ENCODE measurements at regions of chr17 and their contacts with region 1.

Region 1: DNA sequence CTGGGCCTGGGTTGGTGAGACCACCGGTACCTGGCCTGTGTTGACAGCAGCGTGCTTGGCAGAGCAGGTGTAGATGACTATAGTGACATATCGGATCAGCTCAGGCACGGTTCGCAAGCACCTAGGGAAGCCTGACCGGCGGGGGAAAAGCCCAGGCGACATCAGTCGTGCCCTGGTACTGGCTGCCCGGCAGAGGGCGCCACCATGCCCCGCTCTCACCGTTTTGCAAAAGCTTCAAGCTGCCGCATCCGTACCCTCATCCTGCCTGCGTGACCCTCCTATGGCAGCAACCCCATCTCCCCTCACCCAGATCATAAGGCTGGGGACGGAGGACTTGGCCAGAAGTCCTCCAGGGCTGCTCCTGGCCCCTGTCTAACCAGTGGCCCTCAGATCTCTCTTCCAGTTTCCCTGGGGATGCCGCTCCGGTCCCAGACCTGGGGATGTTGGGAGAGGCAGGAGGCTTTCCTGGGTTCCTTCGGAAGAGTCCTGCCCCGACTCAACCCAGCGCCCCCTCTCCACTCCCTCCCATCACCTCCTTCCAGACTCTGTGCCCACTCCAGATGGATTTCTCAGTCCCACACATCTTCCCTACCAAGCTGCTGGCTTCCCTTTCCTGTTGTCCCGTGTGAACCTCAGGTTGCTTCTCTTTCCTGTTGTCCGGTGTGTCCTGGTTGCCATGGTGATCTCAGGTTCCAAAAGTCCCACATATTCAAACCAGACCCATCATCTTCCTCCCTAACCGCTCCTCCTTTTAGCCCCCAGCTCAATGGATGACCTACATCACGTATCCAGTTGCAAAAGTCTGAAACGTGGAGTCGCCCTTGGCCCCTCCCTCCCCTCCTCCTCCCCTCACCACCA is 13.7 kb downstream of the ALOX12B start:
- DNase-seq: peak; percentile 83
- ATAC-seq: peak; percentile 99
- H3K4me3 Mint-ChIP-seq: peak overlapping the region; percentile 78
- H3K27ac Mint-ChIP-seq: peak overlapping the region; percentile 78
- H3K4me1 Mint-ChIP-seq: peaks cover 31% of the 10 kb centered on the region
- H3K27me3 Mint-ChIP-seq: peaks cover 45% of the 10 kb centered on the region
- CTCF ChIP-seq: peak; percentile 56

Region 2: DNA sequence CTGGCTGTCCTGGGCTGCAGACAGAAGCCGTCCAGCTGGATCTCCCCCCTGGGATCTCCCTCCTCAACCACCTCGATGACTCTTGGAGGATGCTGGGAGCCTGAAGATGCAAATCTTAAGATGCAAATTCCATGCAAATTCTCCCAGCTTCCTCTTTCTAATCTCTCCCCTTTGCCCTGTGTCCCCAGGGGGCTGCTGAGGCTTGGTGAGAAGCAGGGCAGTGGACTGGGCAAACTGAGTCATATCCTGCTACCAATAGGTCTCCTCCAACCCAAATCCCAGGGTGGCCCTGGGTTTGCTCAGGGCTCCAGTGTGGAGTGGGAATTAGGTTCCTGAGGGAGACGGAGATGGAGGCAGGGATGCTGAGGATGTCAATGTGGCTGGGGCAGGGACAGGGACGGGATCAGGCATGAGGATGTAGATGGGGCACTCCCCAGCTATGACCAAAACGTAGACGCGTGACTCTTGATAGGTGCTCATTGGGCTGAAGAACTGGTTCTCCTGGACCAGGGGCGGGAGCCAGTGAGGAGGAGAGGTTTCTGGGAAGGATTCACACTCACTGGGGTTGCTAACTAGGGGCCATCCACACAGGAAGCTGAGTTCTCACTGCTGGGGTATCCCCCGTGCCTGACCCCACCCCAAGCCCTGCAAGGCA is 17.3 kb after region 1 on chr17:
- CTCF ChIA-PET with region 1: interaction called, 45 read pairs
- POLR2A ChIA-PET with region 1: interaction called, 18 read pairs
- intact Hi-C with region 1: loop called (anchors 2 kb)
- DNase-seq: peak; percentile 71
- ATAC-seq: peak; percentile 90
- H3K4me3 Mint-ChIP-seq: peak overlapping the region; percentile 80
- H3K27ac Mint-ChIP-seq: peak overlapping the region; percentile 95
- H3K4me1 Mint-ChIP-seq: peaks cover 46% of the 10 kb centered on the region
- H3K27me3 Mint-ChIP-seq: peaks cover 7% of the 10 kb centered on the region
- CTCF ChIP-seq: no peak

Region 3: GRCh38 chr17:8109661-8110464 is 36.0 kb after region 1 on chr17:
- CTCF ChIA-PET with region 1: interaction called, 112 read pairs
- POLR2A ChIA-PET with region 1: interaction called, 6 read pairs
- intact Hi-C with region 1: loop called (anchors 1 kb)
- DNase-seq: peak; percentile 79
- ATAC-seq: peak; percentile 98
- H3K4me3 Mint-ChIP-seq: peak overlapping the region; percentile 57
- H3K27ac Mint-ChIP-seq: no peak overlapping the region
- H3K4me1 Mint-ChIP-seq: peaks cover 6% of the 10 kb centered on the region
- H3K27me3 Mint-ChIP-seq: peaks cover 34% of the 10 kb centered on the region
- CTCF ChIP-seq: no peak

Region 4: DNA sequence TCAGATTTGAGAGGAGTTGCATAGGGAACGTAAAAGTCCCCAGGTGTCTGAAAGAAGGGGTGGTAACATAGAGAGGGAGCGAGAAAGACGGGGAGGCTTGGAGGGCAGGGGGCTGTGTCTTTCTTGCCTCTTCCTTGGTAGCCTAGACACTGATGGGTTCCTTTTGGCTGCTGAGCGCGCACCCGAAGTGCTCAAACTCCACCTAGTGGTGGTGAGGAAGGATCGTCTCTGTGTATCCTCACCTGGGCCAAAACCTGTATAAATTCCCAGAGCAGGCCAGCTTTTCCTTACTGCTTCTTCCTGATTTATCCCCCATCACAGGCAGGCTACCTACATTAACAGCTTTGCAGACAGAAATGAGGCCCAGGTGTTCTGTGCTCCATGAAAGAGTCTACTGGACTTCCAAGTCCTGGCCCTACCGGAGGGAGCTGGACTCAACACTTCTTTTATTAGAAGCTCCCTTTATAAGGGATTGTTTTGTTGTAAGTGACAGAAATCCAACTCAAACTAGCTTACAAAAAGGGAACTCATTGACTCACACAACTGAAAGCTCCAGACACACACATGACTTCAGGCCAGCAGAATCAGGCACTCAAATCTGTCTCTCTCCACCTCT is 226.9 kb after region 1 on chr17:
- CTCF ChIA-PET with region 1: interaction called, 20 read pairs
- POLR2A ChIA-PET with region 1: interaction called, 4 read pairs
- intact Hi-C with region 1: loop called (anchors 1 kb)
- DNase-seq: peak; percentile 30
- ATAC-seq: peak; percentile 97
- H3K4me3 Mint-ChIP-seq: no peak overlapping the region
- H3K27ac Mint-ChIP-seq: peak overlapping the region; percentile 46
- H3K4me1 Mint-ChIP-seq: peaks cover 8% of the 10 kb centered on the region
- H3K27me3 Mint-ChIP-seq: no peaks in the 10 kb centered on the region
- CTCF ChIP-seq: no peak

Measured in activated B cell treated with CpG ODN at 0.5 μM for 24 hours (primary cell).